AG04449 (cell line): ENCODE measurements at regions of chr15 and their contacts with region 1.

Region 1: GRCh38 chr15:78540141-78540928 is at the start of gene PSMA4:
- DNase-seq: no peak
- H3K4me3 ChIP-seq: peak within 1 kb of the TSS; percentile 94
- CTCF ChIP-seq: no peak

Region 2: DNA sequence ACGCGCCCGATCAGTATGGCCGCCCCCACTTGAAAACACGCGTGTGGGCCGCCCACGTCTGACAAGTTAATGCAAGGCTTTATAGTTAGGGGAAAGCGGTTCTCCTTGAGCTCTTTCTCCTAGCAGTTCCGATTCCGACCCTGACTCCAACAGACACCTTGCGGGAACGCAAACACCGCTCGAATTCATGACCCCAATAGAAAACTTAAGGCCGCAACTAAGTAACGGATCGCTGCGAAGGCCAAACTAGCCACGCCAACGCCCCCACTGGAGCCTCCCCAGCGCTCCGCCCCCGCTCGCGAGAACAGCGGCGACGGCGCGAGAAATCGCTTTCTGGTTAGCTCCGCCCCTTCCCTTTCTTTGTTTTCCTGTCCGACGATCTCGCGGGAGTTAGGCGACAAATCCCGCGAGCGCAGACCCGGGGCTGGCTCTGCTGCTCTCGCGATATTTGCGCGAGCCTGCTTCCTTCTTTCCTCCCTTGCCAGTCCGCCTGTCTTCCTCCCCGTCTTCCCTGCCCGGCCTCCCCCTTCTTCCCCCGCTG is 102.5 kb before region 1 on chr15 and contains the start of gene IREB2:
- CTCF ChIA-PET with region 1: no interaction called
- POLR2A ChIA-PET with region 1: interaction called, 14 read pairs
- DNase-seq: peak; percentile 86
- H3K4me3 ChIP-seq: peak within 1 kb of the TSS; percentile 95
- CTCF ChIP-seq: no peak